ENCODE measurements at regions of chr1 and their contacts with region 1.

Region 1: DNA sequence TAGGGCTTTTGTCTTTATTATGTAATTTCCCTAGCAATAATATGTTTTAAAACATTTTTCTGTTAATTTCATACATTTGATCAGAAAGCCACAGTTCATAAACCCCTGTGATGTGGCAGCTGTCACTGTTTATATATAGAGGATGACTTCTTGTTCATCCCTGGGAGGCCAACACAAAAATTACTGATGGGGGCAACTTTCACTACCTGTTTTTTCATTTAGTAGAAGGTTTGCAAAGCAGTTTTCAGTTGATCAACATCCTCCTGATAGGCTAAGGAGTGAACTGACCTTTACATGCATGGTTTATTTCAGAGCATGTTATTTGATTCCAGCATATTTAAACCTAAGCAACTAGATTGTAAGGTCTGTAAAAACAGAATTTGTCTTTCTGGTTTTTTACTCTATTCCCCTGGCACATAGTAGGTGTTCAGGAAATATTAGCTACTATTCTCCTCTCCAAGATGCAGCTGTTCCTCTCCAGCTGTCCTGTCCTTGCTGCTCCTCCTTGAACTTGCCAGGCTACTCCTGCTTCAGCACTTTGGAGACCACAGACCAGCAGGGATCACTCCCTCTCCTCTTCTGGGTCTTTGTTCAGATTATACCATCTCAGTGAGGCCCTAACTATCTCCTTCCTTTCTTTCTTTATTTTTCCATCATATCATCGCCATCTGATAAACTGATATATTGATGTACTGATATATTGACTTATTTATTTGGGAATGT is 54.7 kb downstream of the ROR1 start:
- DNase-seq: peak; percentile 53
- ATAC-seq: peak; percentile 90
- H3K4me3 ChIP-seq: no peak overlapping the region
- H3K4me3 Mint-ChIP-seq: peak overlapping the region; percentile 24
- H3K27ac ChIP-seq: peak overlapping the region; percentile 40 to 59
- H3K27ac Mint-ChIP-seq: peak overlapping the region; percentile 64
- H3K4me1 ChIP-seq: peaks cover 35 to 43% of the 10 kb centered on the region in 2 donors
- H3K4me1 Mint-ChIP-seq: peaks cover 51% of the 10 kb centered on the region
- H3K27me3 ChIP-seq: no peaks in the 10 kb centered on the region
- H3K27me3 Mint-ChIP-seq: peaks cover 4% of the 10 kb centered on the region
- CTCF ChIP-seq: no peak

Region 2: GRCh38 chr1:63773815-63774616 is 54.5 kb before region 1 on chr1 and contains the start of gene ROR1:
- CTCF ChIA-PET with region 1: interaction called, 3 read pairs
- POLR2A ChIA-PET with region 1: no interaction called
- intact Hi-C with region 1: loop called (anchors 2 kb)
- DNase-seq: peak; percentile 72
- ATAC-seq: peak; percentile 90
- H3K4me3 ChIP-seq: peak within 1 kb of the TSS; percentile 42 to 72 (median 53)
- H3K4me3 Mint-ChIP-seq: peak within 1 kb of the TSS; percentile 86
- H3K27ac ChIP-seq: no peak within 1 kb of the TSS
- H3K27ac Mint-ChIP-seq: peak within 1 kb of the TSS; percentile 42
- H3K4me1 ChIP-seq: peaks cover 12 to 21% of the 10 kb centered on the region in 2 donors
- H3K4me1 Mint-ChIP-seq: peaks cover 20% of the 10 kb centered on the region
- H3K27me3 ChIP-seq: peaks cover 0 to 31% (median 25%) of the 10 kb centered on the region in 4 experiments
- H3K27me3 Mint-ChIP-seq: peaks cover 55% of the 10 kb centered on the region
- CTCF ChIP-seq: peak; percentile 43
- total RNA-seq, gene ROR1: 16.0 and 16.3 TPM in 2 replicates

Measured in B cell (primary cell).